Panc1 (cell line): ENCODE measurements at regions of chr1 and their contacts with region 1.

Region 1: DNA sequence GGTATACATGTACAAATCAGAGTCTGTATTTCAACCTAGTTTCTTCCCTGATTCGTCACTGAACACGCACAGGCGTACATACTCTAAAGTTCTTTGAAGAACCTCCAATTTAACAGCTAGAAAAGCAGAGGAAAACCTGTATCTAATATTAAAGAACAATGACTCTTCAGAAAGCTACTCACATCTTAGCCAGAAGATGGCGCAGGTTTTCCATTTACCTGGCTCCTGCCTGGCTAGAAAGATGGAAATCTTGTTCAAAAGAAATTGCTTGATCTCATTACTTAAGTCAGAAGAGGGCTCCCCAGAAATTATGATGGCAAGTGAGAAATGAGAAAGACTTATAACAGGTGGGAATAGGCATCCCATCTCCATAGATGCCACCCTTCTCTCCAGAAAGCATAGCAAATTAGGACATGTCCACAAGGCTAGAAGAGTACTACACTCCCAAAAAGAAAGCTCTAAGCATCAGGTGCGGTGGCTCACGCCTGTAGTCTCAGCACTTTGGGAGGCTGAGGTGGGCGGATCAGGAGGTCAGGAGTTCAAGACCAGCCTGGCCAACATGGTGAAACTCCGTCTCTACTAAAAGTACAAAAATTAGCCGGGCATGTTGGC is 19.0 kb upstream of the L1TD1 start:
- DNase-seq: peak; percentile 25
- ATAC-seq: peak; percentile 82
- H3K4me3 ChIP-seq: no peak overlapping the region
- H3K27ac ChIP-seq: no peak overlapping the region
- H3K4me1 ChIP-seq: no peaks in the 10 kb centered on the region
- H3K27me3 ChIP-seq: no peaks in the 10 kb centered on the region
- CTCF ChIP-seq: peak; percentile 80

Region 2: GRCh38 chr1:62337706-62338631 is 162.3 kb after region 1 on chr1:
- CTCF ChIA-PET with region 1: no interaction called
- POLR2A ChIA-PET with region 1: no interaction called
- in situ Hi-C with region 1: no loop called
- intact Hi-C with region 1: no loop called
- DNase-seq: no peak
- ATAC-seq: no peak
- H3K4me3 ChIP-seq: no peak overlapping the region
- H3K27ac ChIP-seq: no peak overlapping the region
- H3K4me1 ChIP-seq: no peaks in the 10 kb centered on the region
- H3K27me3 ChIP-seq: no peaks in the 10 kb centered on the region
- CTCF ChIP-seq: no peak

Region 3: DNA sequence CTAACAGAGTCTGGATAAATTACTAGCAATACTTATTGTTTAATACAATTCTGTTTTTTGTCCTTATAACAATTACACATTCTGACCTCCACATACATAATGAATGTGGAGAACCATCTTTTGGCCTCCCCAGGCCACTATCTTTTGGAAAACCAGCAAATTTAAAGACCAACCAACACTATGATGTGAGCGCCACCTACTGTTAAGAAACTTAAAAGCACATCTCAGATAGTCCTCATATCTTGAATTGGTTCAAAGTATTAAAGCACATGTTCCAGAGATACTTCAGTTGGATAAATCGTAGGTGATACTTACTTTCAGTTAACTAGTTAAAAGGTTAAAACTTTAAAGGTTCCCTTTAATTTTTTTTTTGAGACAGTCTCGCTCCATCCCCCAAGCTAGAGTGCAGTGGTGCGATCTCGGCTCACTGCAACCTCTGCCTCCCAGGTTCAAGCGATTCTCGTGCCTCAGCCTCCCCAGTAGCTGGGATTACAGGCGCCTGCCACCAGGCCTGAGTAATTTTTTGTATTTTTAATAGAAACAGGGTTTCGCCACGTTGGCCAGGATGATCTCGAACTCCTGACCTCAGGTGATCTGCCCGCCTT is 231.8 kb after region 1 on chr1:
- CTCF ChIA-PET with region 1: interaction called, 7 read pairs
- POLR2A ChIA-PET with region 1: no interaction called
- in situ Hi-C with region 1: no loop called
- intact Hi-C with region 1: loop called (anchors 1 kb)
- DNase-seq: peak; percentile 41
- ATAC-seq: peak; percentile 78; the same call in 1 of the 2 replicates
- H3K4me3 ChIP-seq: no peak overlapping the region
- H3K27ac ChIP-seq: no peak overlapping the region
- H3K4me1 ChIP-seq: no peaks in the 10 kb centered on the region
- H3K27me3 ChIP-seq: no peaks in the 10 kb centered on the region; the same call in 1 of the 2 replicates
- CTCF ChIP-seq: peak; percentile 78

Region 4: DNA sequence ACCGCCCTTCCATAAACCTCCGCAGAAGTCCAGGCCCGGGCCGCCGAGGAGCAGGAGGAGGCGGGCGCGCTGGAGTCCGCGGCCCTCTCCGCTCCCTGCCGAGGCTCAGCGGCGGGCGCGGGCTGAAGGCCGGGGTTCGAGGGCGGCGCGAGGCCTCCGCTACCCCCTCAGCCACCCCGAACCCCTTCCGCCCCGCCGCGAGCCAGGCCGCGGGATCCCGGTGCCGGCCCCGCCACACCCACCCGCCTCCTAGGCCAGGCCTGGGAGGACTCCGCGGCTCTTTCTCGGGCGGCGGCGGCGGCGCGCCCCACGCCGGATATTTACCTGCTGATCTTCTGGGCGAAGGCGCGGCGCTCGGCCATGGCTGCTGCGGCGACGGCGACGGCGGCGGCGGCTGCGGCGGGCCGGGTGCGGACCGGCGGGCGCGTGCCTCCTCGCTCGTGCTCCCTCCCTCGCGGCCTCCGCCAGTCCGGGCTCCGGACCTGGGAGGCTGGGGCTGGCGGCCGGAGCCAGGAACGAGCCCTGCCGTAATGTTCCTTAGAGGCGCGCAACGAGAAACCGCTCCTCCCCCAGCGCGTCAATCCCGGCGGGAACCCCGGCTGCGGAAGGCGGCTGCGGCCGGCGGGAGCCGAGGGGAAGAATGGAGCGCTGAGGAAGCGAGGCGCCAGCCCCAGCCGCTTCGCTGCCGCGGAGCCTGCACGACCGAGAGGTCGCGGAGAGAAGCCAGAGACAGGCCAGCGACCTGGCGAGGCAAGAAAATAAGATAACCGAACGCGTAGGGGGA is 512.4 kb after region 1 on chr1 and contains the start of gene DOCK7:
- CTCF ChIA-PET with region 1: no interaction called
- POLR2A ChIA-PET with region 1: no interaction called
- in situ Hi-C with region 1: no loop called
- intact Hi-C with region 1: no loop called
- DNase-seq: peak; percentile 33
- ATAC-seq: peak; percentile 95
- H3K4me3 ChIP-seq: peak within 1 kb of the TSS; percentile 81 to 83
- H3K27ac ChIP-seq: peak within 1 kb of the TSS; percentile 88
- H3K4me1 ChIP-seq: peaks cover 32% of the 10 kb centered on the region
- H3K27me3 ChIP-seq: no peaks in the 10 kb centered on the region
- CTCF ChIP-seq: no peak
- total RNA-seq, gene DOCK7: 57.2 TPM